B cell (primary cell): ENCODE measurements at regions of chr11 and their contacts with region 1.

Region 1: GRCh38 chr11:615504-616319 is at the start of gene IRF7:
- DNase-seq: peak; percentile 96
- ATAC-seq: peak; percentile 95
- H3K4me3 ChIP-seq: peak within 1 kb of the TSS; percentile 45 to 83 (median 79)
- H3K4me3 Mint-ChIP-seq: peak within 1 kb of the TSS; percentile 92
- H3K27ac ChIP-seq: peak within 1 kb of the TSS; percentile 81 to 85
- H3K27ac Mint-ChIP-seq: peak within 1 kb of the TSS; percentile 94
- H3K4me1 ChIP-seq: peaks cover 18 to 35% of the 10 kb centered on the region in 2 donors
- H3K4me1 Mint-ChIP-seq: peaks cover 17% of the 10 kb centered on the region
- H3K27me3 ChIP-seq: no peaks in the 10 kb centered on the region
- H3K27me3 Mint-ChIP-seq: no peaks in the 10 kb centered on the region
- CTCF ChIP-seq: no peak
- total RNA-seq, gene IRF7: 136 and 147 TPM in 2 replicates

Region 2: DNA sequence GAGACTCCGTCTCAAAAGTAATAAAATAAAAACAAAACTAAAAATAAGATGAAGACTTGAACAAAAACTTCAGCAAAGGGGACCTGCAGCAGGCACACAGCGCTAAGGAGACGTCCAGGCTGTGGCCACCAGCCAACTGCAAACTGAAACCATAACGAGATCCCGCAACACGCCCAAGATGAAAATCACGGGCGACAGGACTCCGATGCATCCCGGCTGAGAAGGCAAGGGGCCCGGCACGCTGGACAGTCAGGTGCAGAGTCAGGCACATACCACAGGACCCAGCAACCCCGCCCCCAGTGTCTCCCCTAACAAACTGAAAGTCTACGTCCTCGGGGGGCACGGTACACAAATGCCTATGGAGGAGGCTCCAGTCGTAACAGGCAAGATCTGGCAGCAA is 89.5 kb before region 1 on chr11:
- CTCF ChIA-PET with region 1: no interaction called
- POLR2A ChIA-PET with region 1: no interaction called
- intact Hi-C with region 1: no loop called
- DNase-seq: peak; percentile 13
- ATAC-seq: no peak
- H3K4me3 ChIP-seq: no peak overlapping the region
- H3K4me3 Mint-ChIP-seq: no peak overlapping the region
- H3K27ac ChIP-seq: no peak overlapping the region
- H3K27ac Mint-ChIP-seq: no peak overlapping the region
- H3K4me1 ChIP-seq: no peaks in the 10 kb centered on the region
- H3K4me1 Mint-ChIP-seq: no peaks in the 10 kb centered on the region
- H3K27me3 ChIP-seq: no peaks in the 10 kb centered on the region
- H3K27me3 Mint-ChIP-seq: no peaks in the 10 kb centered on the region
- CTCF ChIP-seq: no peak

Region 3: GRCh38 chr11:568306-569157 is 47.2 kb before region 1 on chr11:
- CTCF ChIA-PET with region 1: no interaction called
- POLR2A ChIA-PET with region 1: interaction called, 3 read pairs
- intact Hi-C with region 1: loop called (anchors 2 kb)
- DNase-seq: peak; percentile 96
- ATAC-seq: peak; percentile 91
- H3K4me3 ChIP-seq: peak overlapping the region; percentile 30 to 85 (median 68)
- H3K4me3 Mint-ChIP-seq: peak overlapping the region; percentile 83
- H3K27ac ChIP-seq: peak overlapping the region; percentile 50 to 67
- H3K27ac Mint-ChIP-seq: peak overlapping the region; percentile 37
- H3K4me1 ChIP-seq: peaks cover 10 to 13% of the 10 kb centered on the region in 2 donors
- H3K4me1 Mint-ChIP-seq: peaks cover 9% of the 10 kb centered on the region
- H3K27me3 ChIP-seq: peaks cover 0 to 6% (median 2%) of the 10 kb centered on the region in 4 experiments
- H3K27me3 Mint-ChIP-seq: no peaks in the 10 kb centered on the region
- CTCF ChIP-seq: no peak

Region 4: DNA sequence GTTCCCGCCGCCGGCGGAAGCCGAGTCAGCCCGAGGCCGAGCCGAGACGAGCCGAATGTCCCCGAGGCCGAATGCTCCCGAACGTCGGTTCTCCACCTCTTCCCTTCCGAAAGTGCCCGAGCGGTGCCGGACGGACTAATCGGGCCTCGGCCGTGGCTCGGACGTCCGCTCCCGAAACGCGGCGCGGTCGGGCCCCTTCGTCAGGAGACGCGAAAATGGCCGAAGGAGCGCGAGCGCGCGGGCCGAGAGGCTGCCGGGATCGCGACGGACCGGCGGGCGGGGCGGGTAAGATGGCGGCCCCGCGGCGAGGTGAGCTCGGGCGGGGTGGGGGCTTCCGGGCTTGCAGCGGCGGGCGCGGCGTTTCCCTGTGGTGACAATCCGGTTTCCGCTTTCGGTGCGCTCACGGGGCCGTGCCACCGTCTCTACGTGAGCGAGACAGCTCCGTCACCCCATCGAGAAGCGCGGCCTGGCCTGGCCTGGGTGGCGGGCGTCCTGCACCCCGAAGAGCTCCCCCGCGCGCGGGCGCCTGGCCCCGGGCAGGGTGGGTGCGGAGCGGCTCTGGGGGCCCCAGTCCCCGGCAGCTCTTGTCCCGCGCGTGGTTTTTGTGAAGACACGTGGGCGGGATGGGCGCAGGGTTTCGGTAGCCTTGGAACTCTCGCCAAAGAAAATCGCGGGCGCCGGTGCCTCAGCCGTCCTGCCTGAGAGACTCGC is 80.0 kb after region 1 on chr11 and contains the start of gene TMEM80:
- CTCF ChIA-PET with region 1: no interaction called
- POLR2A ChIA-PET with region 1: interaction called, 5 read pairs
- intact Hi-C with region 1: loop called (anchors 1 kb)
- DNase-seq: peak; percentile 99
- ATAC-seq: peak; percentile 65
- H3K4me3 ChIP-seq: peak within 1 kb of the TSS; percentile 52 to 97 (median 84)
- H3K4me3 Mint-ChIP-seq: peak within 1 kb of the TSS; percentile 88
- H3K27ac ChIP-seq: peak within 1 kb of the TSS; percentile 100
- H3K27ac Mint-ChIP-seq: peak within 1 kb of the TSS; percentile 95
- H3K4me1 ChIP-seq: peaks cover 30 to 36% of the 10 kb centered on the region in 2 donors
- H3K4me1 Mint-ChIP-seq: peaks cover 48% of the 10 kb centered on the region
- H3K27me3 ChIP-seq: no peaks in the 10 kb centered on the region
- H3K27me3 Mint-ChIP-seq: no peaks in the 10 kb centered on the region
- CTCF ChIP-seq: no peak
- total RNA-seq, gene TMEM80: 77.8 and 84.1 TPM in 2 replicates

Region 5: DNA sequence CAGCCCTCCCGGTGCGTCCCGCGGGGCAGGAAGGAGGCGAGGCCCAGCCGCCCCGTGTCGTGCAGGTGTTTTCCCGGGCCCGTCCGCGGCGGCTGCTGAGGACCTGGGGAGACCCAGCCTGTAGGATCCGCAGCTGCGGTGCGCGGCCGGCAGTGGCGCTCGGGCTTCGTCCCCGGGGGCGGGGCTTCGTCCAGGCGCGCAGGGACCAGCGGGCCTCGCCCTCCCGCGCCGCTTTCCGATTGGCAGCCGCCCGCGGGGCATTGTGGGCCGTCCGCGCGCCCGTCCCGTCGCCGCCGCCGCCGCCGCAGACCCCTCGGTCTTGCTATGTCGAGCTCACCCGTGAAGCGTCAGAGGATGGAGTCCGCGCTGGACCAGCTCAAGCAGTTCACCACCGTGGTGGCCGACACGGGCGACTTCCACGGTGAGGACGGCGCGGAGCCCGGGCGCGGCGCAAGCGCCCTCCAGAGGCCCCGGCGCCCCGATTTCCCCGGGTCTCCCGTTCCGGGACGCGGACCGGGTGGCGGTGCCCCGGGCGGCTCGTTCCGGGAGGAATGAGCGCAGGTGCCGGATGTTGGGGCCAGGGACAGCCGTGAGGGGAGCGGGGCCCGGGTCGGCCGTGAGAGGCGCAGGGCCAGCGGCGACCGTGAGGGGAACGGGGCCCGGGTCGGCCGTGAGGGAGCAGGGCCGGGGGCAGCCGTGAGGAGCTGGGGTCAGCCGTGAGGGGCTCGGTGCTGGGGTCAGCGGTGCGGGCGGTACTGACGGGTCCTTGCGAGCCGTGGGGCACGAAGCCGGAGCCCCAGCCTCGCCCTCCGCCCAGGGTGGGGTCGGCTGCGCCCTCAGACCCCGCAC is 131.7 kb after region 1 on chr11 and contains the start of gene TALDO1:
- CTCF ChIA-PET with region 1: no interaction called
- POLR2A ChIA-PET with region 1: no interaction called
- intact Hi-C with region 1: loop called (anchors 1 kb)
- DNase-seq: peak; percentile 90
- ATAC-seq: peak; percentile 97
- H3K4me3 ChIP-seq: peak within 1 kb of the TSS; percentile 56 to 88 (median 73)
- H3K4me3 Mint-ChIP-seq: peak within 1 kb of the TSS; percentile 88
- H3K27ac ChIP-seq: peak within 1 kb of the TSS; percentile 31 to 77
- H3K27ac Mint-ChIP-seq: peak within 1 kb of the TSS; percentile 83
- H3K4me1 ChIP-seq: peaks cover 17 to 27% of the 10 kb centered on the region in 2 donors
- H3K4me1 Mint-ChIP-seq: peaks cover 16% of the 10 kb centered on the region
- H3K27me3 ChIP-seq: no peaks in the 10 kb centered on the region
- H3K27me3 Mint-ChIP-seq: no peaks in the 10 kb centered on the region
- CTCF ChIP-seq: no peak
- total RNA-seq, gene TALDO1: 105 and 116 TPM in 2 replicates